B cell (primary cell): ENCODE measurements at regions of chr17 and their contacts with region 1.

Region 1: DNA sequence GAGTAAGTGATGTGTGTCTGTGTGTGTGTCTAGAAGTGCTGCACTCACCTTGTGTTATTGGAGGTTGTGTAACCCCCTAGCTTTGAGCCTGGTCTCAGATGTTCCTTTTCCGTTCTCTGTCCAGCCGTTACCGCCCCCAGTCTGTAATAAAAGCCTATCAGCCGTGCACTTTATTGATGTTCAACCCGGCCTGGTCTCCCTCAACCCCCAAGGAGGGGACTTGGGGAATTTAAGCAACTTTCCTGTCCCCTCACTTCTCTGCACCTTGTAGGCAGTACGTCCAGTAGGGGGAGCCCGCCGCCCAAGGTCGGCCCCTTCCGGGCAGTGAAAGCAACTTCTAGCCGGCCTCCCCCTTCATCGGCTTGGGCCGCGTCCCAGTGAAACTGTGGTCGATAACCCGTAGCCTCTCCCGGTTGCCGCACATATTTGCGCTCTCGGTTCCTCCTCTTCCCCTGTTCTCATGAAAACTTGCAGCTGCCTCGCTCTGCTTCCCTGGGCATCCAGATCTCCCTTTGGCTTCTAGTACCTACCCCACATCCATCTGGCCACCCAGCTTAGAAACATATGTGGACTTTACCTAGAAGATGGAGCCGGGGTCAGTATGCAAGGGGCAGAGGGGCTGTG is 7.9 kb downstream of the PNPO start:
- DNase-seq: peak; percentile 80
- ATAC-seq: peak; percentile 81
- H3K4me3 ChIP-seq: peak overlapping the region in 3 of 5 experiments; percentile 31 to 46 (median 38)
- H3K4me3 Mint-ChIP-seq: peak overlapping the region; percentile 78
- H3K27ac ChIP-seq: peak overlapping the region in 1 of 2 donors; percentile 63
- H3K27ac Mint-ChIP-seq: peak overlapping the region; percentile 66
- H3K4me1 ChIP-seq: peaks cover 13 to 23% of the 10 kb centered on the region in 2 donors
- H3K4me1 Mint-ChIP-seq: peaks cover 23% of the 10 kb centered on the region
- H3K27me3 ChIP-seq: no peaks in the 10 kb centered on the region
- H3K27me3 Mint-ChIP-seq: no peaks in the 10 kb centered on the region
- CTCF ChIP-seq: peak; percentile 89

Region 2: GRCh38 chr17:47850692-47851573 is 98.3 kb before region 1 on chr17 and contains the start of gene SP6:
- CTCF ChIA-PET with region 1: no interaction called
- POLR2A ChIA-PET with region 1: no interaction called
- intact Hi-C with region 1: no loop called
- DNase-seq: peak; percentile 59
- ATAC-seq: peak; percentile 87
- H3K4me3 ChIP-seq: peak within 1 kb of the TSS in 3 of 5 experiments; percentile 29 to 44 (median 37)
- H3K4me3 Mint-ChIP-seq: peak within 1 kb of the TSS; percentile 67
- H3K27ac ChIP-seq: no peak within 1 kb of the TSS
- H3K27ac Mint-ChIP-seq: no peak within 1 kb of the TSS
- H3K4me1 ChIP-seq: peaks cover 36 to 48% of the 10 kb centered on the region in 2 donors
- H3K4me1 Mint-ChIP-seq: peaks cover 25% of the 10 kb centered on the region
- H3K27me3 ChIP-seq: peaks cover 0 to 88% (median 61%) of the 10 kb centered on the region in 4 experiments
- H3K27me3 Mint-ChIP-seq: peaks cover 79% of the 10 kb centered on the region
- CTCF ChIP-seq: no peak
- total RNA-seq, gene SP6: not detected in 2 replicates

Region 3: GRCh38 chr17:47915776-47916398 is 33.4 kb before region 1 on chr17:
- CTCF ChIA-PET with region 1: no interaction called
- POLR2A ChIA-PET with region 1: no interaction called
- intact Hi-C with region 1: no loop called
- DNase-seq: no peak
- ATAC-seq: no peak
- H3K4me3 ChIP-seq: no peak overlapping the region
- H3K4me3 Mint-ChIP-seq: no peak overlapping the region
- H3K27ac ChIP-seq: no peak overlapping the region
- H3K27ac Mint-ChIP-seq: no peak overlapping the region
- H3K4me1 ChIP-seq: no peaks in the 10 kb centered on the region
- H3K4me1 Mint-ChIP-seq: no peaks in the 10 kb centered on the region
- H3K27me3 ChIP-seq: no peaks in the 10 kb centered on the region
- H3K27me3 Mint-ChIP-seq: no peaks in the 10 kb centered on the region
- CTCF ChIP-seq: no peak

Region 4: DNA sequence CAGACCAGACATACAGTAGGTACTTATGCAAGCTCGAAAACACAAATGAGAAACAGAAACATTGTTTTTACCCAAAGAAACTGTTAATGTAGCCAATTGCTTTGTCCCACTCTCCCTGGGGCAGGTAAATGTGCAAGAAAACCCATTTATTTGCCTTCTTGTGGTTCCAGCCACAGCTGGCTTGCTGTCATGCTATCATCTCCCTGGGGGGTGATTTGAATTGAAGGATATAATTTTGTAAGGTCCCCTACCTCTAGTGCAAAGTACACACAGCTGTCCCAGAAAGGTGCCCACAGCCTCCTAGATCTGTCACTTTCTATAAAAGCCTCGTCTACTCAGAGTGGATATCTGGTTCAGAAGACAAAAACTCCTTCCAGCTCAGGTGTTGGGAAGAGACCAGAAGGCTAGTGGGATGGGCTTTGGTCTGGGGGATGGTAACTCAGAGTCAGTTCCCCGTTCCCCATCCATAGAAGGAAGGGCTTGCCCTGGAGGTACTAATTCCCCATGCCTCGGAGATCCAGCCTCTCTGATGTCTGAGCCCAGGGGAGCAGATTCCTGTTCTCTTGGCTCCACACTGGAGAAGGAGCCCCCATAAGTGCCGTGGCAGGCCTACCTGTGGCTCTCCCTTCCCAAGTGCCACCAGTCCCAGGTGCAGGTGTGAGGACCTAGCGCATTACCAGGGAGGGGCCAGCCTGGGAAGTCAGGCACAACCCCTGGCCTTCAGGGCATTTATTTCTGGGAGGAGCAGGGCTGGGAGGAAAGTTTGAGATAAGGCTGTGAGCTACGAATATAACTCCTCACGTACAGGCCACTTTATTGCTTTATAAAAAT is 10.8 kb after region 1 on chr17:
- CTCF ChIA-PET with region 1: interaction called, 15 read pairs
- POLR2A ChIA-PET with region 1: no interaction called
- intact Hi-C with region 1: no loop called
- DNase-seq: no peak
- ATAC-seq: no peak
- H3K4me3 ChIP-seq: no peak overlapping the region
- H3K4me3 Mint-ChIP-seq: no peak overlapping the region
- H3K27ac ChIP-seq: no peak overlapping the region
- H3K27ac Mint-ChIP-seq: no peak overlapping the region
- H3K4me1 ChIP-seq: no peaks in the 10 kb centered on the region
- H3K4me1 Mint-ChIP-seq: no peaks in the 10 kb centered on the region
- H3K27me3 ChIP-seq: no peaks in the 10 kb centered on the region
- H3K27me3 Mint-ChIP-seq: no peaks in the 10 kb centered on the region
- CTCF ChIP-seq: no peak

Region 5: DNA sequence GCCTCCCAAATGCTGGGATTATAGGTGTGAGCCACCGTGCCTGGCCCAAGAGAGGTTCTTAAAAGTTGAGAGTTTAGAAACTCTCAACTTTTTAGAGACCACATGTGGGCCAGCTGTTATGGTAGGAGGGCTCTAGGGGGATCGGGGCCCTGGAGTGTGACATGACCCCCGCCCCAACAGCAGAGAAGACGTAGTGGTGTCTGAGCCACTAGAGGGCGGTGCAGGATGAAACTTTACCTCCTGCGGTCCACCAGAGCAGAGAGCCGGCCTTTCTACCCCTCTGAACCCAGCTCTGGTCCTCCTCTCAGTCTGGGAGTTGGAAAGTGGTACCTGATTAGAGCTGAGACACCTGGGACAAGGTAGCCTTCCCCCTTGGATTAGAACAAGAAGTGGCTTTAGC is 29.1 kb after region 1 on chr17:
- CTCF ChIA-PET with region 1: interaction called, 155 read pairs
- POLR2A ChIA-PET with region 1: no interaction called
- intact Hi-C with region 1: no loop called
- DNase-seq: peak; percentile 67
- ATAC-seq: peak; percentile 88
- H3K4me3 ChIP-seq: no peak overlapping the region
- H3K4me3 Mint-ChIP-seq: no peak overlapping the region
- H3K27ac ChIP-seq: no peak overlapping the region
- H3K27ac Mint-ChIP-seq: no peak overlapping the region
- H3K4me1 ChIP-seq: no peaks in the 10 kb centered on the region
- H3K4me1 Mint-ChIP-seq: peaks cover 2% of the 10 kb centered on the region
- H3K27me3 ChIP-seq: no peaks in the 10 kb centered on the region
- H3K27me3 Mint-ChIP-seq: no peaks in the 10 kb centered on the region
- CTCF ChIP-seq: peak; percentile 77

Region 6: GRCh38 chr17:48270896-48271295 is 321.6 kb after region 1 on chr17:
- CTCF ChIA-PET with region 1: no interaction called
- POLR2A ChIA-PET with region 1: no interaction called
- intact Hi-C with region 1: no loop called
- DNase-seq: no peak
- ATAC-seq: no peak
- H3K4me3 ChIP-seq: no peak overlapping the region
- H3K4me3 Mint-ChIP-seq: no peak overlapping the region
- H3K27ac ChIP-seq: no peak overlapping the region
- H3K27ac Mint-ChIP-seq: no peak overlapping the region
- H3K4me1 ChIP-seq: no peaks in the 10 kb centered on the region
- H3K4me1 Mint-ChIP-seq: no peaks in the 10 kb centered on the region
- H3K27me3 ChIP-seq: no peaks in the 10 kb centered on the region
- H3K27me3 Mint-ChIP-seq: peaks cover 3% of the 10 kb centered on the region
- CTCF ChIP-seq: no peak